ENCODE measurements at regions of chr3 and their contacts with region 1.

Region 1: GRCh38 chr3:69425261-69425660 is 39.4 kb upstream of the FRMD4B start:
- DNase-seq: no peak
- H3K4me3 ChIP-seq: no peak overlapping the region
- H3K27ac ChIP-seq: no peak overlapping the region
- H3K4me1 ChIP-seq: no peaks in the 10 kb centered on the region; a peak in 1 of 7 replicates
- H3K27me3 ChIP-seq: no peaks in the 10 kb centered on the region
- CTCF ChIP-seq: peak in 2 of 3 experiments; percentile 79 to 85; a peak in 3 of 4 replicates
- EP300 ChIP-seq: no peak
- POLR2A ChIP-seq: no peak
- RAD21 ChIP-seq: peak; percentile 83 to 89

Region 2: DNA sequence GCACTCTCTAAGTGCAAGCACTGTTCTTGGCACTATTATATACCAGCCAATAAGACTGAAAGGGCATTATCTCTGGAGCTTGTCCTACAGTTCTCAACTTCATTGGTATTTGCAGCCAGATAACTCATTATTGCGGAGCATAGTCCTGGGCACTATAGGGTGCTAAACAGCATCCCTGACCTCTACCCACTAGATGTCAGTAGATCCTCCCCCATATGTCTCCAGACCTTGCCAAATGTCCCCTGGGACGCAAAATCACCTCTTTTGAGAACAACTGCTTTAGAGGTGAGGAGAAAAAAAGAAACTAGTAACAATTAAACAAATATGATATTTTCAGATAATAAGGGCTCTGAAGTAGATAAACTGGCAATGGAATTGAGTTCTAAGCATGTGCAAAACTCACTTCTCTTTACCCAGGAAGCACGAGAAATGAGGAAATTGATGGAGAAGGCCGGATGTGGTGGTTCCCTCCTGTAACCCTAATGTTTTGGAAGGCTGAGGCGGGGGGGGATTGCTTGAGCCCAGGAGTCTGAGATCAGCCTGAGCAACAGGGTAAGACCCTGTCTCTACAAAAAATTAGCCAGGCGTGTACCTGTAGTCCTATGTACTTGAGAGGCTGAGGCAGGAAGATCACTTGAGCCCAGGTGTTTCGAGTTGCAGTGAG is 100.8 kb before region 1 on chr3:
- CTCF ChIA-PET with region 1: interaction called, 95 read pairs
- POLR2A ChIA-PET with region 1: interaction called, 3 read pairs
- DNase-seq: peak in 1 of 2 experiments; percentile 5
- H3K4me3 ChIP-seq: no peak overlapping the region
- H3K27ac ChIP-seq: no peak overlapping the region
- H3K4me1 ChIP-seq: peaks cover 0 to 4% (median 0%) of the 10 kb centered on the region in 4 experiments; a peak in 1 of 7 replicates
- H3K27me3 ChIP-seq: no peaks in the 10 kb centered on the region; a peak in 1 of 7 replicates
- CTCF ChIP-seq: peak; percentile 49 to 83 (median 74)
- EP300 ChIP-seq: no peak
- POLR2A ChIP-seq: no peak
- RAD21 ChIP-seq: peak; percentile 88 to 94

Region 3: DNA sequence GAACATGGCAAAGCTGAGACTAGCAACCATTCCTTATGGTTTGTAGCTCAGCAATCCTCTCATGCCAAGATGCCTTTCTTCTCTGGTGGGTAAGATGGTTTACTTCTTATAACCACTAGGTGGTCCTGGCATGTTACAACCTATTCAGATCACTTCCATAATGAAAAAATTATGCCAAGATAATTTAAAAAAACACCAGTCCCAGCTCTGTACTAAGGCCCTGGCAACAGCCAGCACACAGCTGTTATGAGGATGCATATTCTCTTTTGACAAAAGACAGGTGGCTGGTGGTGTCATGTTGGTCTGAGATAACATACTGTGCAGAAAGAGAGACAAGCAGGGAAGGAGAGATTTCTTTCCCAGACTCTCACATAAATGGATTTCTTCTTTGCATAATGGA is 26.3 kb after region 1 on chr3:
- CTCF ChIA-PET with region 1: no interaction called
- POLR2A ChIA-PET with region 1: no interaction called
- DNase-seq: no peak
- H3K4me3 ChIP-seq: no peak overlapping the region
- H3K27ac ChIP-seq: no peak overlapping the region
- H3K4me1 ChIP-seq: no peaks in the 10 kb centered on the region
- H3K27me3 ChIP-seq: no peaks in the 10 kb centered on the region
- CTCF ChIP-seq: peak in 2 of 3 experiments; percentile 15 to 36; a peak in 1 of 4 replicates
- EP300 ChIP-seq: no peak
- POLR2A ChIP-seq: no peak
- RAD21 ChIP-seq: peak; percentile 13 to 23; a peak in 2 of 4 replicates

Region 4: DNA sequence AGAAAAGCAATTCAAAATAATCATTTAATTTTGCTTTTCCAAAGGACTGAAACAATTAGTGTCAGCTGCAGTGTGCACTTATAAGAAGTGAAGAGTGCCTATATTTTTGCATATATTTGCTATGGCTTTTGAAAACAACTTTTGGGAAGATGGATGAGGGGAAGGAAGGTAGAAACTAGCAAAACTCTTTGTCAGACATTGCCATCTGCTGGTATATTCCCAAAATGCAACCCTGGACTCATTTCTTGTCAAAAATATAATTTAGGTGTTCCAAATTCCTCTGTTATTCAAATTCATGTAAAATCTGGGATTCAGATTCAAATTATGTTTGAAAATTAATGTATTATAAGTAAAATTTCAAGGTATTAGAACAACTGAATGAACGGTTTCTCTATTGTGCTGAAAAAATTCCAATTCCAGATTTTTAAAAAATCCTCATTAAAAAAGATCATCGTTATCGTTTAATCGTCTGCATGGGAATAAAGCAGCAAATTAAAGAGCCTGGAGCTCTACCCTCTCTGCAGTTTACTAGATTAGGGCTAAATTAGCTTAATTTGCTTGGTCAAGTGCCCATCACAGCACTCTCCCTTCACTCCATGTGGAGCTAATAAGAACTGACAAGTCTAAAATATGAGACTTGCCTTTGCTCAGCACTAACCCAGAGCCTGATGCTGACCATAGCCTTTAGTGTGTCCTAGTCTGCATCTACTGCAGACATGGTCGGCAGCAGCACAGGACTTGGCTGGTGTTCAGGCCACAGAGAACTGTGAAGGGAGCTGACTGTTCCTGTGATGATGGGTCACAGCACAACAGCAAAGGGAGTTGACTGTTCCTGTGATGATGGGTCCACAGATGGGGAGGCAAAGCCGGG is 246.1 kb after region 1 on chr3:
- CTCF ChIA-PET with region 1: interaction called, 11 read pairs
- POLR2A ChIA-PET with region 1: no interaction called
- DNase-seq: no peak
- H3K4me3 ChIP-seq: no peak overlapping the region
- H3K27ac ChIP-seq: no peak overlapping the region
- H3K4me1 ChIP-seq: no peaks in the 10 kb centered on the region
- H3K27me3 ChIP-seq: no peaks in the 10 kb centered on the region
- CTCF ChIP-seq: peak in 2 of 3 experiments; percentile 52 to 58; a peak in 2 of 4 replicates
- EP300 ChIP-seq: no peak
- POLR2A ChIP-seq: no peak
- RAD21 ChIP-seq: peak; percentile 85 to 87